AG04450 (cell line): ENCODE measurements at regions of chr15 and their contacts with region 1.

Region 1: GRCh38 chr15:101258238-101259144 is 6.6 kb upstream of the CHSY1 start:
- DNase-seq: no peak
- H3K4me3 ChIP-seq: no peak overlapping the region
- H3K27ac ChIP-seq: no peak overlapping the region
- H3K27me3 ChIP-seq: no peaks in the 10 kb centered on the region
- CTCF ChIP-seq: peak; percentile 78

Region 2: DNA sequence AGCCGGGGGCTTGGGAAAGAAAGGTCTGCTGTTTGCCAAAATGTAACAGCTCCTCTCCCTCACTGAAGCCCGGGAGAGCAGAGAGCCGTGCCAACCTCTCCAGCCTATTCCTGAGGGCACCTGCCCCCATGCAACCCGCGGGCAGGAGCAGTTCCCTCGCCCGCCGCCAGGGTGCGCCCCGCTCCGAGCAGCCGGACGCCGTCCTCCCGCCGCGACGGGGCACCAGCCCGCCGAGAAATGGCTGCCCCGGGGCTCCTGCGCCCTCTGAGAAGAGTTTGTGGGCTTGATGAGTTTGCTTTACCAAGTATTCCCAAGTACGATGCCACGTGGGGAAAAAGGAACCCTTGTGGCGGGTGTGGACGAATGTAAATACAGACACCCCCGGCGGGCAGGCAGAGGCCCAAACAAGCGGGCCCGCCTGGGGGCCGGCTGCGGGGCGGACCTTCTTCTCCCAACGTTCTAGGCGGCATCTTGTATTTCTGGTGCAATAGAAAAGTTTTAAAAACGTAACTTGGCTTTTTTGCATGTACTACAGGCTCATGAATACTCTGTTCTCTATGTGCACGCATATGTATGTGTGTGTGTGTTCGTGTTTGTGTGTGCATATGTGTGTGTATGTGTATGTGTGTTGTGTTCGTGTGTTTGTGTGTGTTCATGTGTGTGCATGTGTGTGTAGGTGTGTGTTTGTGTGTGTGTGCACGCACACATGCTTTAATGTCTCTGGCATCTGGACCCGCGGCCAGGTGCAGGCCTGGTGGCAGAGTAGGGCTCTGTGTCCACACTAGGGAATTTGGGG is 169.5 kb before region 1 on chr15:
- CTCF ChIA-PET with region 1: interaction called, 17 read pairs
- POLR2A ChIA-PET with region 1: no interaction called
- DNase-seq: no peak
- H3K4me3 ChIP-seq: no peak overlapping the region; the same call in 1 of the 2 replicates
- H3K27ac ChIP-seq: no peak overlapping the region
- H3K27me3 ChIP-seq: no peaks in the 10 kb centered on the region
- CTCF ChIP-seq: peak; percentile 87